MCF 10A (cell line): ENCODE measurements at regions of chr18 and their contacts with region 1.

Region 1: DNA sequence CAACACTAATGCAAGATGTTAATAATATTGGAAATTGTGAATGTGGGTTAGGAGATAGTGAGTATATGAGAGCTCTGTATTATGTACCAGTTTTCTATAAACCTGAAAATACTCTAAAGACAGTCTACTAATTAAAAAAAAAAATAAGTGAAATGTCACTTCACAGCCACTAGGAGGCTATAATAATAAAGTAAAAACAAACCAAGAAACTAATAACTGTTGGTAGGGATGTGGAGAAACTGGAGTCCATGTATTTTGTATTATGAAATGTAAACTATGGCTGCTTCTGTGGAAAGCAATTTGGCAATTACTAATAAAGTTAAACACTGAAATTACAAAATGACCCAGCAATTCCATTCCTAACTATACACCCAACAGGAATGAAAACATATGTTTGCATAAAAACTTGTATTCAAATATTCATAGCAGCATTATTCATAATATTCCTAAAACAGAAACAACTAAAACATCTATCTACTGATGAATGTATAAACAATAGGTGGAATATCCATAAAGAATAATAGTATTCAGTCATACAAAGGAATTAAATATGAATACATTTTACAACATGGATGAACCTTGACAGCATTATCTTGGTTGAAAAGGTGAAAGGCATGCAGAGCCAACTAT is 36.2 kb downstream of the CCDC178 start:
- DNase-seq: no peak
- H3K4me3 Mint-ChIP-seq: no peak overlapping the region
- H3K27ac Mint-ChIP-seq: no peak overlapping the region
- H3K4me1 Mint-ChIP-seq: no peaks in the 10 kb centered on the region
- H3K27me3 Mint-ChIP-seq: peaks cover 61% of the 10 kb centered on the region
- CTCF ChIP-seq: peak; percentile 26

Region 2: GRCh38 chr18:33495278-33495677 is 90.9 kb after region 1 on chr18:
- CTCF ChIA-PET with region 1: no interaction called
- POLR2A ChIA-PET with region 1: no interaction called
- intact Hi-C with region 1: loop called (anchors 5 kb)
- DNase-seq: peak; percentile 42
- H3K4me3 Mint-ChIP-seq: no peak overlapping the region
- H3K27ac Mint-ChIP-seq: no peak overlapping the region
- H3K4me1 Mint-ChIP-seq: no peaks in the 10 kb centered on the region
- H3K27me3 Mint-ChIP-seq: peaks cover 73% of the 10 kb centered on the region
- CTCF ChIP-seq: peak; percentile 27

Region 3: GRCh38 chr18:33761363-33761762 is 357.0 kb after region 1 on chr18:
- CTCF ChIA-PET with region 1: no interaction called
- POLR2A ChIA-PET with region 1: no interaction called
- intact Hi-C with region 1: loop called (anchors 5 kb)
- DNase-seq: peak; percentile 22
- H3K4me3 Mint-ChIP-seq: no peak overlapping the region
- H3K27ac Mint-ChIP-seq: no peak overlapping the region
- H3K4me1 Mint-ChIP-seq: no peaks in the 10 kb centered on the region
- H3K27me3 Mint-ChIP-seq: no peaks in the 10 kb centered on the region
- CTCF ChIP-seq: peak; percentile 30